Natural killer cell (primary cell): ENCODE measurements at regions of chr2 and their contacts with region 1.

Region 1: GRCh38 chr2:43174368-43174916 is 52.0 kb downstream of the ZFP36L2 start:
- DNase-seq: peak; percentile 59 to 92
- ATAC-seq: peak; percentile 69 to 83 (median 82)
- H3K4me3 ChIP-seq: peak overlapping the region; percentile 8
- H3K4me3 Mint-ChIP-seq: peak overlapping the region; percentile 88
- H3K27ac ChIP-seq: peak overlapping the region; percentile 94
- H3K27ac Mint-ChIP-seq: peak overlapping the region; percentile 99
- H3K4me1 ChIP-seq: peaks cover 96% of the 10 kb centered on the region
- H3K4me1 Mint-ChIP-seq: peaks cover 45 to 73% of the 10 kb centered on the region in 2 donors
- H3K27me3 ChIP-seq: no peaks in the 10 kb centered on the region
- H3K27me3 Mint-ChIP-seq: no peaks in the 10 kb centered on the region
- CTCF ChIP-seq: no peak

Region 2: GRCh38 chr2:43219383-43220228 is 45.2 kb after region 1 on chr2:
- intact Hi-C with region 1: loop called (anchors 1 kb)
- DNase-seq: peak; percentile 73 to 93
- ATAC-seq: peak; percentile 39 to 70 (median 57)
- H3K4me3 ChIP-seq: peak overlapping the region; percentile 92
- H3K4me3 Mint-ChIP-seq: peak overlapping the region; percentile 82
- H3K27ac ChIP-seq: peak overlapping the region; percentile 96
- H3K27ac Mint-ChIP-seq: peak overlapping the region; percentile 90 to 99
- H3K4me1 ChIP-seq: peaks cover 58% of the 10 kb centered on the region
- H3K4me1 Mint-ChIP-seq: peaks cover 66 to 68% of the 10 kb centered on the region in 2 donors
- H3K27me3 ChIP-seq: no peaks in the 10 kb centered on the region
- H3K27me3 Mint-ChIP-seq: peaks cover 0 to 4% of the 10 kb centered on the region in 2 donors
- CTCF ChIP-seq: no peak